Activated CD8-positive, alpha-beta T cell treated with anti-CD3 and anti-CD28 coated beads for 36 hours (primary cell): ENCODE measurements at regions of chr19 and their contacts with region 1.

Region 1: GRCh38 chr19:48795055-48795684 is 15.7 kb downstream of the BCAT2 start:
- DNase-seq: peak; percentile 90
- ATAC-seq: peak; percentile 99
- H3K4me3 Mint-ChIP-seq: peak overlapping the region; percentile 81
- H3K27ac Mint-ChIP-seq: peak overlapping the region; percentile 93
- H3K4me1 Mint-ChIP-seq: peaks cover 8% of the 10 kb centered on the region
- H3K27me3 Mint-ChIP-seq: no peaks in the 10 kb centered on the region
- CTCF ChIP-seq: peak; percentile 99

Region 2: GRCh38 chr19:48770260-48770659 is 24.9 kb before region 1 on chr19:
- CTCF ChIA-PET with region 1: no interaction called
- POLR2A ChIA-PET with region 1: no interaction called
- intact Hi-C with region 1: no loop called
- DNase-seq: no peak
- ATAC-seq: no peak
- H3K4me3 Mint-ChIP-seq: no peak overlapping the region
- H3K27ac Mint-ChIP-seq: no peak overlapping the region
- H3K4me1 Mint-ChIP-seq: no peaks in the 10 kb centered on the region
- H3K27me3 Mint-ChIP-seq: peaks cover 13% of the 10 kb centered on the region
- CTCF ChIP-seq: no peak

Region 3: GRCh38 chr19:48806518-48806817 is 11.3 kb after region 1 on chr19:
- CTCF ChIA-PET with region 1: interaction called, 27 read pairs
- POLR2A ChIA-PET with region 1: interaction called, 16 read pairs
- intact Hi-C with region 1: no loop called
- DNase-seq: no peak
- ATAC-seq: no peak
- H3K4me3 Mint-ChIP-seq: no peak overlapping the region
- H3K27ac Mint-ChIP-seq: no peak overlapping the region
- H3K4me1 Mint-ChIP-seq: peaks cover 15% of the 10 kb centered on the region
- H3K27me3 Mint-ChIP-seq: no peaks in the 10 kb centered on the region
- CTCF ChIP-seq: no peak

Region 4: DNA sequence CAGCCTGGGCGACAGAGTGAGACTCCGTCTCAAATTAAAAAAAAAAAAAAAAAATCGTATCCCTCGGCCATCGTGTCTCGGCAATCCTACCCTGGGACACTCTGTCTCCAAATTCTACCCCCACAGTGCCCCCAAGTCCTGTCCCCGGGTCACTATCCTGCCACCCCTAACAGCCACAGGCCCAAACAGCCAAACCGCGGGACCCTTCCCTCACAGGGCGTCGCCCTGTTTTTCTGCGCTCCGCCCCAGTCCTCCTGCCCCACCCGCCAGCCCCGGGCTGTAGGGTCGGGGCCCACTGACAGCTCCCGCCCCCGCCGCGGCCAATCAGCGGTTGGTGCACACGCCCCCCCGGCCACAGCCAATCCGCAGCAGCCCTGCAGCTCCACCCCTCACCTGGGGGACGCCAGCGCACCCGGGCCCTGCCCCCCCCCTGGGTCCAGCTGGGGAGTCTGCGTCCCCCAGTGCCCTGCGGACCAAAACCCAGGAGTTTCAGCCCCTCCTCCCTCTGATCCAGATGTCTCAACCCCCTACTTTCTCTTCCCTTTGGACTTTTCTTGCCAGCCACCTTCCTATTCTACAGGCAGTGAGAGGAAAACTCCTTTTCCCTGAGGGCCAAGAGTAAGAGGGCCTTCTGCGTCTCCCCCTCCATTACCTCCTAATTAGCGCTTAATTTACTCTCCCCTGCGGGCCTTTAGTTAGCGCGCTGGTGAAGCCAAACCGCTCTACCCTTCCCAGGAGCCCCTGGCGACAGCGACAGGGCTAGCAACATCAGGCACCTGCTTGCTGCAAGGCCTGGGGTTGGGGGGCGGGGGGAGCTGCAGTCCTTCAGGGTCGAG is 17.1 kb after region 1 on chr19:
- CTCF ChIA-PET with region 1: interaction called, 27 read pairs
- POLR2A ChIA-PET with region 1: interaction called, 16 read pairs
- intact Hi-C with region 1: no loop called
- DNase-seq: peak; percentile 78
- ATAC-seq: peak; percentile 68
- H3K4me3 Mint-ChIP-seq: peak overlapping the region; percentile 74
- H3K27ac Mint-ChIP-seq: peak overlapping the region; percentile 63
- H3K4me1 Mint-ChIP-seq: peaks cover 22% of the 10 kb centered on the region
- H3K27me3 Mint-ChIP-seq: no peaks in the 10 kb centered on the region
- CTCF ChIP-seq: no peak

Region 5: GRCh38 chr19:48826606-48827020 is 31.4 kb after region 1 on chr19:
- CTCF ChIA-PET with region 1: interaction called, 12 read pairs
- POLR2A ChIA-PET with region 1: interaction called, 3 read pairs
- intact Hi-C with region 1: no loop called
- DNase-seq: no peak
- ATAC-seq: no peak
- H3K4me3 Mint-ChIP-seq: no peak overlapping the region
- H3K27ac Mint-ChIP-seq: no peak overlapping the region
- H3K4me1 Mint-ChIP-seq: no peaks in the 10 kb centered on the region
- H3K27me3 Mint-ChIP-seq: no peaks in the 10 kb centered on the region
- CTCF ChIP-seq: no peak

Region 6: DNA sequence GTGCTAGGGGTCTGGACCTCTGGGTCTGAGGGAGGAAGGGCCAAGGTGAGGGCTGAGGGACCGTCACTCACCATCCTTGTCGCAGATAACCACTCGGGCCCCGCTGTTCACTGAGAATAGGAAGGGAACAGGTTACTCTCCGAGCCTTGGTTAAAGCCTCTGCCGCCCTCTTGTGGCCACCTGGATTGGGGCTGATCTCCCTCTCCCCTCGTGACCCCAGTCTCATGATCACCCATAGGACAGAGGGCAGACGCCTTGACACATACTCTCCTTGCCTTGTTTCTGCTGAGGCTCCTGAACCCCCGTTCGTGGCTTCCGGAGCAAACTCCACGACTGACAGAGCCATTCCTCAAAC is 40.5 kb after region 1 on chr19:
- CTCF ChIA-PET with region 1: interaction called, 227 read pairs
- POLR2A ChIA-PET with region 1: interaction called, 3 read pairs
- intact Hi-C with region 1: loop called (anchors 2 kb)
- DNase-seq: peak; percentile 100
- ATAC-seq: peak; percentile 88
- H3K4me3 Mint-ChIP-seq: peak overlapping the region; percentile 78
- H3K27ac Mint-ChIP-seq: peak overlapping the region; percentile 86
- H3K4me1 Mint-ChIP-seq: peaks cover 14% of the 10 kb centered on the region
- H3K27me3 Mint-ChIP-seq: peaks cover 5% of the 10 kb centered on the region
- CTCF ChIP-seq: peak; percentile 70

Region 7: DNA sequence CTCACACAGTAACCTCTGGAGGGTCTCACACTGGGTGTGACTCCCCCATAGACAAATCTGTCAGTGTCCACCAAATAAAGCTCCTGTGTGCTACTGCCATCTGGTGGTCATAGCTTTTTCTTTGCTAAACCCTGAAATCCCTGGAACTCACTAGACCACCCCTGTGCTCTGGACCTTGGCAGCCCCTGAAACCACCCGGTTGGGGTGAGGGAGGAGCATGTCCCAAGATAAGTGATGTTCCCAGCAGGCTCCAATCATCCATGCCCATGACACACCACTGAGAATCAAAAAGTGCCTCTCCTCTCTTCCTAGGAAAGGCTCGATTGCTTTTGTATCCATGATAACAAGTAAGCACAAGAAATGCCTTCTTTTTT is 47.6 kb after region 1 on chr19:
- CTCF ChIA-PET with region 1: interaction called, 227 read pairs
- POLR2A ChIA-PET with region 1: interaction called, 3 read pairs
- intact Hi-C with region 1: no loop called
- DNase-seq: peak; percentile 65
- ATAC-seq: peak; percentile 69
- H3K4me3 Mint-ChIP-seq: no peak overlapping the region
- H3K27ac Mint-ChIP-seq: no peak overlapping the region
- H3K4me1 Mint-ChIP-seq: no peaks in the 10 kb centered on the region
- H3K27me3 Mint-ChIP-seq: no peaks in the 10 kb centered on the region
- CTCF ChIP-seq: peak; percentile 85

Region 8: DNA sequence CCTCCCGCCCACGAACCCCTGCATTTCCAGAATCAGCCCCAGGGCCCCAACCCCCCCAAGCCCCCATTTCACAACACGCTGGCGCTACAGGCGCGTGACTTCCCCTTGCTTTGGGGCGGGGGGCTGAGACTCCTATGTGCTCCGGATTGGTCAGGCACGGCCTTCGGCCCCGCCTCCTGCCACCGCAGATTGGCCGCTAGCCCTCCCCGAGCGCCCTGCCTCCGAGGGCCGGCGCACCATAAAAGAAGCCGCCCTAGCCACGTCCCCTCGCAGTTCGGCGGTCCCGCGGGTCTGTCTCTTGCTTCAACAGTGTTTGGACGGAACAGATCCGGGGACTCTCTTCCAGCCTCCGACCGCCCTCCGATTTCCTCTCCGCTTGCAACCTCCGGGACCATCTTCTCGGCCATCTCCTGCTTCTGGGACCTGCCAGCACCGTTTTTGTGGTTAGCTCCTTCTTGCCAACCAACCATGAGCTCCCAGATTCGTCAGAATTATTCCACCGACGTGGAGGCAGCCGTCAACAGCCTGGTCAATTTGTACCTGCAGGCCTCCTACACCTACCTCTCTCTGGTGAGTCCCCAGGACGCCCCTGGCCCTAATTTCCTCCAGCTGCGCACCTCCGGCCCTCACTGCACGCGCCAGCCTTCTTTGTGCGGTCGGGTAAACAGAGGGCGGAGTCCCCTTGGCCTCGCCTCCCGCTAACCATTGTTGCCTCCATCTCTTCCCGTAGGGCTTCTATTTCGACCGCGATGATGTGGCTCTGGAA is 170.1 kb after region 1 on chr19 and contains the start of gene FTL:
- CTCF ChIA-PET with region 1: interaction called, 12 read pairs
- POLR2A ChIA-PET with region 1: interaction called, 7 read pairs
- intact Hi-C with region 1: loop called (anchors 5 kb)
- DNase-seq: peak; percentile 96
- ATAC-seq: peak; percentile 68
- H3K4me3 Mint-ChIP-seq: peak within 1 kb of the TSS; percentile 98
- H3K27ac Mint-ChIP-seq: peak within 1 kb of the TSS; percentile 100
- H3K4me1 Mint-ChIP-seq: peaks cover 51% of the 10 kb centered on the region
- H3K27me3 Mint-ChIP-seq: no peaks in the 10 kb centered on the region
- CTCF ChIP-seq: no peak
- total RNA-seq, gene FTL: 1,296 to 1,324 TPM